ENCODE measurements at regions of chr12 and their contacts with region 1.

Region 1: DNA sequence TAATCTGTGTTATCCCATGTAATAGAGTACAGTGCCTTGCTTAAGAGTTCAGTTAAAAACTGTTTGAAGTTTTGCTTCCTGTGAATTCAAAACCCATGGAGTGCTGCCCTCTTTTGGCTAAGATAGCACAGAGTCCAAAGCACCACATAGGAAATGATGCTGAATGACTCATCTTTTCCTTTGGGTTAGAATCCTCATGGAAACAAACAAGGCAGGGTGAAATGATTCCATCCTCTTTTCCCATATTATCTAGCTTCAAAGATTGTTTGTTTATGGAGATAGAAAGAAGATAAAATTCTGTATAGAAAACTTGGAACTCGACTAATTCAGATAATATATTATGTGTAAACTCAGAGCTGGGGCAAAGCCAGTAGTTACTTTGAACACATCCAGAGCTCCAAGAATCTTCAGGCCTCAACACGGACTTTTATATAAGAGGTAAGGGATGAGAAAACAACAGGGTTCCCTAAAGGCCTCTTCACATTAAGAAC is 87.4 kb downstream of the OTOGL start:
- DNase-seq: peak; percentile 32
- ATAC-seq: peak; percentile 87 to 90

Region 2: GRCh38 chr12:79555028-79555930 is 631.5 kb before region 1 on chr12:
- intact Hi-C with region 1: loop called in 1 of 2 experiments (anchors 5 kb)
- DNase-seq: no peak
- ATAC-seq: peak; percentile 20 to 41

Region 3: GRCh38 chr12:79766705-79767464 is 419.9 kb before region 1 on chr12:
- intact Hi-C with region 1: loop called in 1 of 2 experiments (anchors 5 kb)
- DNase-seq: no peak
- ATAC-seq: no peak

Measured in left cardiac atrium (tissue), 4 donors.